ENCODE measurements at regions of chr6 and their contacts with region 1.

Region 1: DNA sequence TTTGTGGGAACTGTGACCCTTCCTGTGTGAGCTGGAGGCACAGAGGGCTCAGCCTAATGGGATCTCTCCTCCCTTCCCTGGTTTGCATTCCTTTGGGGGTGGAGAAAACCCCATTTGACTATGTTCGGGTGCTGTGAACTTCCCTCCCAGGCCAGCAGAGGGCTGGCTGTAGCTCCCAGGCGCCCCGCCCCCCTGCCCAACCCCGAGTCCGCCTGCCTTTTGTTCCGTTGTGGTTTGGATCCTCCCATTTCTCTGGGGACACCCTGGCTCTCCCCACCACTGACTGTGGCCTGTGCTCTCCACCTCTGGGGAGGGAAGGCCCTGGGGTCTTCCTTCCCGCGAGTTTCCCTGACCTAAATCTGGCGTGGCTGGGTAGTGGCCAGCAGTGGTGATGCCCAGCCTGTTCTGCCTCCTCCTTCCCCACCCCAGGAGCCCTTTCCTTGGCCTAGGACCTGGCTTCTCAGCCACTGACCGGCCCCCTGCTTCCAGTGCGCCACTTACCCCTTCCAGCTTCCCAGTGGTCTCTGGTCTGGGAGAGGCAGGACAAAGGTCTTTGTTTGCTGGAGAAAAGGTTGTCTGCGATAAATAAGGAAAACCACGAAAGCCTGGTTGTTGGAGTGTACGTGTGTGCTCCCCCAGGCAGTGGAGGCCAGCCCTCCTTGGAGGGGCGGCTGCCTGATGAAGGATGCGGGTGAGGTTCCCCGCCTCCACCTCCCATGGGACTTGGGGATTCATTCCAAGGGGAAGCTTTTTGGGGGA is 4.9 kb downstream of the VEGFA start:
- DNase-seq: peak; percentile 91
- H3K4me3 ChIP-seq: peak overlapping the region; percentile 94 to 95; a peak in 3 of 4 replicates
- H3K27ac ChIP-seq: peak overlapping the region; percentile 33 to 93; a peak in 2 of 4 replicates
- H3K4me1 ChIP-seq: peaks cover 14 to 64% of the 10 kb centered on the region in 2 experiments
- H3K27me3 ChIP-seq: no peaks in the 10 kb centered on the region
- CTCF ChIP-seq: peak; percentile 81
- EP300 ChIP-seq: no peak
- RAD21 ChIP-seq: peak; percentile 54

Region 2: GRCh38 chr6:43708860-43709653 is 65.9 kb before region 1 on chr6:
- CTCF ChIA-PET with region 1: no interaction called
- POLR2A ChIA-PET with region 1: no interaction called
- DNase-seq: no peak
- H3K4me3 ChIP-seq: no peak overlapping the region
- H3K27ac ChIP-seq: no peak overlapping the region
- H3K4me1 ChIP-seq: peaks cover 0 to 3% of the 10 kb centered on the region in 2 experiments; a peak in 1 of 4 replicates
- H3K27me3 ChIP-seq: peaks cover 9% of the 10 kb centered on the region; the same call in 1 of the 2 replicates
- CTCF ChIP-seq: no peak
- EP300 ChIP-seq: no peak
- RAD21 ChIP-seq: no peak

Region 3: GRCh38 chr6:43723737-43724295 is 51.1 kb before region 1 on chr6:
- CTCF ChIA-PET with region 1: interaction called, 47 read pairs
- POLR2A ChIA-PET with region 1: no interaction called
- DNase-seq: peak; percentile 77
- H3K4me3 ChIP-seq: no peak overlapping the region; a peak in 1 of 4 replicates
- H3K27ac ChIP-seq: no peak overlapping the region
- H3K4me1 ChIP-seq: peaks cover 0 to 13% of the 10 kb centered on the region in 2 experiments; a peak in 2 of 4 replicates
- H3K27me3 ChIP-seq: no peaks in the 10 kb centered on the region
- CTCF ChIP-seq: peak; percentile 62
- EP300 ChIP-seq: no peak
- RAD21 ChIP-seq: peak; percentile 83

Region 4: GRCh38 chr6:43796903-43797888 is 22.2 kb after region 1 on chr6:
- CTCF ChIA-PET with region 1: interaction called, 22 read pairs
- POLR2A ChIA-PET with region 1: no interaction called
- DNase-seq: no peak
- H3K4me3 ChIP-seq: no peak overlapping the region
- H3K27ac ChIP-seq: no peak overlapping the region; a peak in 1 of 4 replicates
- H3K4me1 ChIP-seq: peaks cover 0 to 23% of the 10 kb centered on the region in 2 experiments; a peak in 2 of 4 replicates
- H3K27me3 ChIP-seq: no peaks in the 10 kb centered on the region
- CTCF ChIP-seq: no peak
- EP300 ChIP-seq: no peak
- RAD21 ChIP-seq: no peak

Region 5: DNA sequence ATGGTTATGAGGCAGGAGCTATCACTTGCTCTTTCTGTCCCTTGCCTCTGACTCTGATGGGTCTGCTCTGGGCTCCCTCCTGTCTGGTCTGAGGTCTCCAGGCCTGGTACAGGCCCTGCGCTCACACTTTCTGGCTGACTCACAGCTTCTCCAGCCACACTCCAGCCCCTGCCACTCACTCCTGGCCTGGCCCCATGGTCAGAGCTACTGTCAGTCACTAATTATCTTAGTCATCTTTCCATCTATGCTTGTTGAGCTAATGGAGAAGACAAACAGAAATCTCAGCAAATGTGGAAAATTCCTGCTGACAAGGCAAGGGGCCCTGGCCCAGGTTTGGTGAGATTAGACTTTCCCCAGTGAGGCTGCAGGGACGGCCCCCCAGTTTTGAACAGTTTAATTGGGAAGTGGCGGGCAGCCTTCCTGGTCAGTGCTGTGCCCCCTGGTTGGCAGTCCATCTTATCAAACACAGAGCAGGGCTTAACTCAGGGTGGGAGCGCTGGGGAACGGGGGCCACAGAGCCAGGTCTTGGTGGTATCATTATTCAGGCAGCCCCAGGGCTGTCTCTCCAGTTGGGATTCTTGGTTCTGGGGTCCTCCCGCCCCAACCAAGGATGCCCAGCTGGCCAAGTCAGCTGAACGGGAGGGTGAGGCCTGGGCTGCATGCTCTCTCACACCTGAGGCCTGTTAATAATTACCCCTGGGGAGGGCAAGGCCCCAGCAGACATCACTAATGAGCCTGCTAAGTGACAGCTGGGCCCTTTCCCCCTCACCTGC is 58.5 kb after region 1 on chr6:
- CTCF ChIA-PET with region 1: interaction called, 26 read pairs
- POLR2A ChIA-PET with region 1: interaction called, 3 read pairs
- DNase-seq: peak; percentile 61
- H3K4me3 ChIP-seq: no peak overlapping the region
- H3K27ac ChIP-seq: peak overlapping the region in 1 of 2 experiments; percentile 30; a peak in 1 of 4 replicates
- H3K4me1 ChIP-seq: peaks cover 1 to 30% of the 10 kb centered on the region in 2 experiments; a peak in 2 of 4 replicates
- H3K27me3 ChIP-seq: no peaks in the 10 kb centered on the region
- CTCF ChIP-seq: no peak
- EP300 ChIP-seq: no peak
- RAD21 ChIP-seq: no peak

Region 6: DNA sequence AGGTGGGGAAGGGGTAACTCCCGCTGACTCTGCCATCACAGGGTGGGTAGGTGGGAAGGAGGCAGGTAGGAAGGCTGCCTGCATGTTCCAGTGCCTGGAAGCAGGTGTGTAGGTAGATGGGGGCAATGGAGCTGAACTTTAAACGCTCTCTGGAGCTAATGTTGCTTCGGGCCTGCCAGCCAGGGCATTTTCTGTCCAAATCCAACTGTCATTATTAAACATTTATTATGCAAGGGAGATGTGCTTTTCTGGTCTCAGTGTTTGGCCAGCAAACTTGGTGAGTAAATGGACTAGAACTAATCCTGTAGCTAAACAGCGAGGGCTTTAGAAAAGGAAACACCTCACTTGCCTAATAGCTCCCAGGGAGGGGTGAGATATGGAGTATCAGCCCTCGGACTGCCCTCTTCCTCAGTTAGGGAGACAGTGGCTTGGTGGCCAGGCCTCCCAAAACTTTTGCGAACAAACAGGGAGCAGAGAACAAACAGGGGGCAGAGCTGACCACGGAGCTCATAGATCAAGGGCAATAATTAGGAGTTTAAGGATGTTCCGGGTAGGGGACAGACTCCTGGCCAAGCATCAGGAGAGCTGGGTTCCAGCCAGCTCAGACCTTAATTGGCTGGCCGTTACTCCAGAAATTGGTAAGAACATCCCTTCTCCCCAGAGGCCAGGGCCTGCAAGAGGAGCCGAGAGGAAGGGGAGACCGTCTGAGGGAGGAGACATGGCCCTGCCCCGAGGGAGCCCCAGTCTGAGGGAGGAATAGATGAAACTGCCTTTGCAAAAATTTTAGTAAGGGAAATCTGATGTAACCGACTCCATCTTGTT is 126.2 kb after region 1 on chr6:
- CTCF ChIA-PET with region 1: interaction called, 18 read pairs
- POLR2A ChIA-PET with region 1: interaction called, 5 read pairs
- DNase-seq: no peak
- H3K4me3 ChIP-seq: no peak overlapping the region
- H3K27ac ChIP-seq: peak overlapping the region in 1 of 2 experiments; percentile 91; a peak in 2 of 4 replicates
- H3K4me1 ChIP-seq: peaks cover 0 to 61% of the 10 kb centered on the region in 2 experiments; a peak in 2 of 4 replicates
- H3K27me3 ChIP-seq: no peaks in the 10 kb centered on the region
- CTCF ChIP-seq: no peak
- EP300 ChIP-seq: no peak
- RAD21 ChIP-seq: no peak

Region 7: GRCh38 chr6:43937236-43938164 is 162.5 kb after region 1 on chr6:
- CTCF ChIA-PET with region 1: interaction called, 36 read pairs
- POLR2A ChIA-PET with region 1: interaction called, 28 read pairs
- DNase-seq: peak; percentile 67
- H3K4me3 ChIP-seq: no peak overlapping the region
- H3K27ac ChIP-seq: peak overlapping the region in 1 of 2 experiments; percentile 100; a peak in 2 of 4 replicates
- H3K4me1 ChIP-seq: peaks cover 0 to 93% of the 10 kb centered on the region in 2 experiments; a peak in 3 of 4 replicates
- H3K27me3 ChIP-seq: no peaks in the 10 kb centered on the region
- CTCF ChIP-seq: no peak
- EP300 ChIP-seq: peak in 1 of 2 experiments; percentile 43; a peak in 2 of 4 replicates
- RAD21 ChIP-seq: 0 out of 2 replicates have a peak, but pooled peaks have one; percentile 17